ENCODE measurements at regions of chr2 and their contacts with region 1.

Region 1: GRCh38 chr2:160429248-160430000 is 64.2 kb downstream of the RBMS1 start:
- DNase-seq: no peak
- ATAC-seq: peak; percentile 28
- H3K4me3 Mint-ChIP-seq: no peak overlapping the region
- H3K27ac Mint-ChIP-seq: peak overlapping the region; percentile 74
- H3K4me1 Mint-ChIP-seq: peaks cover 72% of the 10 kb centered on the region
- H3K27me3 Mint-ChIP-seq: no peaks in the 10 kb centered on the region

Region 2: GRCh38 chr2:159863526-159864160 is 565.8 kb before region 1 on chr2:
- CTCF ChIA-PET with region 1: no interaction called
- POLR2A ChIA-PET with region 1: no interaction called
- DNase-seq: no peak
- ATAC-seq: no peak
- H3K4me3 Mint-ChIP-seq: no peak overlapping the region
- H3K27ac Mint-ChIP-seq: no peak overlapping the region
- H3K4me1 Mint-ChIP-seq: no peaks in the 10 kb centered on the region
- H3K27me3 Mint-ChIP-seq: no peaks in the 10 kb centered on the region

Region 3: GRCh38 chr2:160406591-160407392 is 22.6 kb before region 1 on chr2:
- CTCF ChIA-PET with region 1: interaction called, 44 read pairs
- POLR2A ChIA-PET with region 1: interaction called, 20 read pairs
- DNase-seq: peak; percentile 82
- ATAC-seq: peak; percentile 66
- H3K4me3 Mint-ChIP-seq: peak overlapping the region; percentile 89
- H3K27ac Mint-ChIP-seq: peak overlapping the region; percentile 85
- H3K4me1 Mint-ChIP-seq: peaks cover 76% of the 10 kb centered on the region
- H3K27me3 Mint-ChIP-seq: no peaks in the 10 kb centered on the region

Region 4: DNA sequence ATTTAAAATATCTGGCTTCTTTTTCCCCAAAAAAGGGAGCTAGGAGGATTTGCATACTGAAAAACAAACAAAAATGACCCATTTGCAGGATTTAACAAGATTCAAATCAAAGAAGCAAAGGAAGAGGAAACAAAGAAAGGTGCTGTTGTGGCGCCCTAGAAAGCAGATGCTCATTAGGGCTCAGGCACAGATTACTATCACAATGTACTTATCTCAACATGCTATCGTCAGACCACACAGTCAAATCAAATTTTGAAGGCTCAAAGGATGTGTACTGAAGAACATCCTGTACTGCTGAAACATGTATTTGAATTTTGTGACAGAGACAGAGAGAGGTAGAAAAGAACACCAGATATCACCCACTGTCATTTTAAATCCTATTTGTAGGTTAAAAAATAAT is 53.2 kb after region 1 on chr2:
- CTCF ChIA-PET with region 1: interaction called, 18 read pairs
- POLR2A ChIA-PET with region 1: no interaction called
- DNase-seq: peak; percentile 67
- ATAC-seq: peak; percentile 94
- H3K4me3 Mint-ChIP-seq: peak overlapping the region; percentile 60
- H3K27ac Mint-ChIP-seq: peak overlapping the region; percentile 90
- H3K4me1 Mint-ChIP-seq: peaks cover 74% of the 10 kb centered on the region
- H3K27me3 Mint-ChIP-seq: no peaks in the 10 kb centered on the region

Region 5: GRCh38 chr2:160489111-160489510 is 59.7 kb after region 1 on chr2:
- CTCF ChIA-PET with region 1: interaction called, 18 read pairs
- POLR2A ChIA-PET with region 1: interaction called, 3 read pairs
- DNase-seq: no peak
- ATAC-seq: no peak
- H3K4me3 Mint-ChIP-seq: no peak overlapping the region
- H3K27ac Mint-ChIP-seq: no peak overlapping the region
- H3K4me1 Mint-ChIP-seq: peaks cover 68% of the 10 kb centered on the region
- H3K27me3 Mint-ChIP-seq: no peaks in the 10 kb centered on the region